ENCODE measurements at regions of chr17 and their contacts with region 1.

Region 1: DNA sequence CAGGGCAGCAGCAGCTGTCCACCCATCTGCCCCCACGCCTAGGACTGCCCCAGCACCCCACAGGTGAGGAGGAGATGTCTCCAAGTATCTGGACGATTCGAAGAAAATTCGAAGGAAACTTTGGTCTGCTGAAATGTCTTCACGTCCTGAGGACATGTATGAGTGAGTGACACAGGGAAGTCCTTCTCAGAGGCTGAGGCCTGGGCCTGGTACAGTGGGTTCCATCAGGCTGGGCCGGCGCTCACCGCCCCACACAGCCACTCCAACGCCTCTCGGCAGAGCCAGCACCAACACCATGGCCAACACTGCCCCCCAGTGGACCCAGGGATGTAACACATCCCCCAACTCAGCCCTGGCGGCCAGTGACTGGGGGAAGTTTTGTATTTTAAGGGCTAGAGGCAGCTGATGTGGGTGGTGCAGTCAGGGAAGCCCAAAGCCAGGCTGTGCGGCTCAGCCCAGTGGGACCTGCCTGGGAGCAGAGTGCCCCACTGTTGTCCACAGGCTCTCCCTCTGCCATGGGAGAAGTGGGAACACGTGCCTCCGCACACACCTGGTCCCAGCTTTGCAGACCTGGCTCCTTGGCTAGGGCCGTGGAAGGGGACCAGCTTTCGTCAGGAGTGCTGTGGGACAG is 55.8 kb upstream of the FASN start:
- DNase-seq: peak; percentile 76 to 92 (median 90)
- ATAC-seq: peak; percentile 88 to 90
- H3K4me3 ChIP-seq: no peak overlapping the region
- H3K27ac ChIP-seq: no peak overlapping the region
- H3K4me1 ChIP-seq: no peaks in the 10 kb centered on the region
- H3K27me3 ChIP-seq: no peaks in the 10 kb centered on the region

Region 2: GRCh38 chr17:82013341-82013740 is 140.5 kb before region 1 on chr17:
- intact Hi-C with region 1: no loop called
- DNase-seq: no peak
- ATAC-seq: peak; percentile 12 to 20
- H3K4me3 ChIP-seq: no peak overlapping the region
- H3K27ac ChIP-seq: peak overlapping the region; percentile 76
- H3K4me1 ChIP-seq: peaks cover 2% of the 10 kb centered on the region
- H3K27me3 ChIP-seq: no peaks in the 10 kb centered on the region

Region 3: GRCh38 chr17:82030470-82031302 is 123.2 kb before region 1 on chr17:
- intact Hi-C with region 1: loop called (anchors 2 to 5 kb)
- DNase-seq: peak; percentile 85 to 94 (median 92)
- ATAC-seq: peak; percentile 74 to 81
- H3K4me3 ChIP-seq: peak overlapping the region; percentile 23
- H3K27ac ChIP-seq: no peak overlapping the region
- H3K4me1 ChIP-seq: no peaks in the 10 kb centered on the region
- H3K27me3 ChIP-seq: no peaks in the 10 kb centered on the region

Region 4: DNA sequence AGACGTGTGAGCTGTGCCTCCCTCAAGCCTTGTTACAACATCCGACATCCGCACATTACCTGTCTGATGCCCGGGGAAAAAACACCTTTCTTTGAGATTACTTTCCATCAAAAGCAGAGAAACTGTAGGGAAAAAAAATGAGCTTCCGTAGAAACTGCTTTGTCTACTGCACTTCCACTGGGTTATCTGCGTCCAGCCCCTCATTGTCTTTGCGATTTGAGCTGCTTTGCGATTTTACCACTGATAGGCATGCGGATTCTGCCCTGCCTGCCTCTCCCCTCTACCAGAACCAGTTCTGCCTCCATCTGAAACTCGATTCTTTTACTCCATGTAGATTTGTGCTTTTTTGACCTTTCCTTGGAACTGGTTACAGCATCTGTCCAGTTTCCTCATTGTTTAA is 12.2 kb before region 1 on chr17:
- intact Hi-C with region 1: loop called in 1 of 4 experiments (anchors 2 kb)
- DNase-seq: no peak
- ATAC-seq: no peak
- H3K4me3 ChIP-seq: no peak overlapping the region
- H3K27ac ChIP-seq: no peak overlapping the region
- H3K4me1 ChIP-seq: no peaks in the 10 kb centered on the region
- H3K27me3 ChIP-seq: no peaks in the 10 kb centered on the region

Measured in right cardiac atrium (tissue), 5 donors.